Activated CD4-positive, alpha-beta T cell treated with anti-CD3 and anti-CD28 coated beads for 36 hours (primary cell): ENCODE measurements at regions of chr1 and their contacts with region 1.

Region 1: DNA sequence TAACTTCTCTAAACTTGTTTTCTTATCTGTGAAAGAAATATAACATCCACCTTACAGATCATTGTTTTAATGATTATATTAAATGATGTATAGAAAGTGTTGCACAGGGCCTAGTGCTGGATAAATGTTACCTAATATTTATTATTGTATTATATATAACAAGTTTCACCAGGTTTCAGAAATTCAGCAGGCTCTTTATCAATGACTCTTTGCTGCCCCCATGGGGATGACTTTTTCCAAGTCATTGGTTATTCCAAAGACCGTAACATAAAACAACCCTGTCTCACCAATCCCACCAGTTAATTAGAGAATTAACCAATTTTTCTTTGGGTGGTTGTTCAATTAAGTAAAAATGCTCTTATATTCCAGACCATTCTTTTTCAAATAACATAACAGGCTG is 7.3 kb upstream of the DEDD start:
- DNase-seq: peak; percentile 61
- ATAC-seq: peak; percentile 53
- H3K4me3 Mint-ChIP-seq: no peak overlapping the region
- H3K27ac Mint-ChIP-seq: no peak overlapping the region
- H3K4me1 Mint-ChIP-seq: peaks cover 3% of the 10 kb centered on the region
- H3K27me3 Mint-ChIP-seq: no peaks in the 10 kb centered on the region

Region 2: DNA sequence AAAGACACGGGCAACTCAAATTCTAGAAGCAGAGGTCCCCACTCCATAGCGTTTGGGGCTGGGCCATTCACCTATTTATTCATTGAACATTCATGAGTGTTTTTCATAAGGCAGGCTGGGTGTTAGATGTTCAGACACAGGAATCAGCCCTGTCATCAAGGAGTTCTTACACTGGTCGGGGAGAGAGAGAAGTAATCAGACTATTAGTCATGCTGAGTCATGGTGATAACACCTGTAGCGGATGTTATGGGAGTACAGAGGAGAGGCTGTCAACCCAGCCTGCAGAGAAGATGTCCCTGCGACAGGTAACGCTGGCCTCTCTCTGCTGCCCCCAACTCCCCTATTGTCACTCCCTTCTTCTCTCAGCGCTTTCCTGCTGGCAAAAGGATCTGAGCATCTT is 326.6 kb before region 1 on chr1:
- CTCF ChIA-PET with region 1: no interaction called
- POLR2A ChIA-PET with region 1: no interaction called
- intact Hi-C with region 1: no loop called
- DNase-seq: peak; percentile 32
- ATAC-seq: peak; percentile 98
- H3K4me3 Mint-ChIP-seq: no peak overlapping the region
- H3K27ac Mint-ChIP-seq: no peak overlapping the region
- H3K4me1 Mint-ChIP-seq: peaks cover 42% of the 10 kb centered on the region
- H3K27me3 Mint-ChIP-seq: no peaks in the 10 kb centered on the region

Region 3: GRCh38 chr1:160997323-160998038 is 142.3 kb before region 1 on chr1:
- CTCF ChIA-PET with region 1: interaction called, 7 read pairs
- POLR2A ChIA-PET with region 1: no interaction called
- intact Hi-C with region 1: loop called in 1 of 2 experiments (anchors 1 kb)
- DNase-seq: peak; percentile 71
- ATAC-seq: peak; percentile 81
- H3K4me3 Mint-ChIP-seq: no peak overlapping the region
- H3K27ac Mint-ChIP-seq: peak overlapping the region; percentile 58
- H3K4me1 Mint-ChIP-seq: peaks cover 18% of the 10 kb centered on the region
- H3K27me3 Mint-ChIP-seq: no peaks in the 10 kb centered on the region

Region 4: GRCh38 chr1:161106431-161106830 is 33.3 kb before region 1 on chr1:
- CTCF ChIA-PET with region 1: interaction called, 5 read pairs
- POLR2A ChIA-PET with region 1: no interaction called
- intact Hi-C with region 1: loop called in 1 of 2 experiments (anchors 5 kb)
- DNase-seq: no peak
- ATAC-seq: no peak
- H3K4me3 Mint-ChIP-seq: no peak overlapping the region
- H3K27ac Mint-ChIP-seq: peak overlapping the region; percentile 23
- H3K4me1 Mint-ChIP-seq: peaks cover 18% of the 10 kb centered on the region
- H3K27me3 Mint-ChIP-seq: no peaks in the 10 kb centered on the region